Prostate gland (tissue), 2 donors: ENCODE measurements at regions of chr19 and their contacts with region 1.

Region 1: DNA sequence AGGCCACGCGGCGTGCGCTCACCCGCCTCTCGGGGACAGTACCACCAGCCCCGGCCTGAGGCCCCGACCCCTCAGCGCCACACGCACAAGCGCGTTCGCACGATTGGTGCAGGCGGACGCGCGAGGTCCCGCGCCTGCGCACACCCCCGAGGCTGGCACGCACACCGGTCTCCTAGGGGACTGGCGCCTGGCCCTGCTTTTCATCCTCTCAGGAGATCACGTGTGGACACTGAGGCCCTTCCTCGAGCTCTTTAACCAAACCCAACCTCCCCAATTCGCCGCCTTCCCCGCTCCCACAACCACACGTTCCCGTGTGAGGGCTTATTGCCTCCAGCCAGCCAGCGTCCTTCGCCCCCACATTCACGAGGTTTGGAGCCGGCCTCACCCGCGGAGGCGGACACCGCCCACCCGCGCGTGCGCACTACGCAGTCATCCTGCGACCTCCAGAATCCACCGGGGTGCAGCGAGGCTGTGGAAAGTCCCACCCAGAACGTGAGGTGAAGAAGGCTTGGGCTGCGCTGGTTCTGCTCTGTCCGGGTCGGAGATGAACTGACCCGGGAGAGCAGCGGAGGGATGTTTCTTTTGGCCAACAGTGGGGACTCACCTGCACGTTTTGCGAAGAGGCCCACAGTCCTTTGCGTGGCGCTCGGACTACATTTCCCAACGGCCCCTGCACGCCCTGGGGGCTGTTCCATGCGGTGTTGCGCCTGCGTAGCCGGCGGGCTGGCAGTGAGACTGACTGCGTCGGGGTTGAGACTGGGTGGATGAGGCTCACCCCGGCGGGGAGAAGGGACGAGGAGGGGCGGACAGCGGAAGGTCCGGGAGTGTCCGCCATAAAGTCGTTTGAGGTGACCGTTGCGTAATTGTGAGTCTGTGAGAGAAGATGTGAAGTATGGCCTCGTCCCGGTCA is 539 bp upstream of the ZNF667 start:
- DNase-seq: peak; percentile 92
- H3K4me3 ChIP-seq: peak overlapping the region; percentile 46 to 69
- H3K27ac ChIP-seq: peak overlapping the region; percentile 82 to 84
- H3K4me1 ChIP-seq: no peaks in the 10 kb centered on the region
- H3K27me3 ChIP-seq: no peaks in the 10 kb centered on the region
- CTCF ChIP-seq: no peak
- POLR2A ChIP-seq: peak; percentile 47

Region 2: DNA sequence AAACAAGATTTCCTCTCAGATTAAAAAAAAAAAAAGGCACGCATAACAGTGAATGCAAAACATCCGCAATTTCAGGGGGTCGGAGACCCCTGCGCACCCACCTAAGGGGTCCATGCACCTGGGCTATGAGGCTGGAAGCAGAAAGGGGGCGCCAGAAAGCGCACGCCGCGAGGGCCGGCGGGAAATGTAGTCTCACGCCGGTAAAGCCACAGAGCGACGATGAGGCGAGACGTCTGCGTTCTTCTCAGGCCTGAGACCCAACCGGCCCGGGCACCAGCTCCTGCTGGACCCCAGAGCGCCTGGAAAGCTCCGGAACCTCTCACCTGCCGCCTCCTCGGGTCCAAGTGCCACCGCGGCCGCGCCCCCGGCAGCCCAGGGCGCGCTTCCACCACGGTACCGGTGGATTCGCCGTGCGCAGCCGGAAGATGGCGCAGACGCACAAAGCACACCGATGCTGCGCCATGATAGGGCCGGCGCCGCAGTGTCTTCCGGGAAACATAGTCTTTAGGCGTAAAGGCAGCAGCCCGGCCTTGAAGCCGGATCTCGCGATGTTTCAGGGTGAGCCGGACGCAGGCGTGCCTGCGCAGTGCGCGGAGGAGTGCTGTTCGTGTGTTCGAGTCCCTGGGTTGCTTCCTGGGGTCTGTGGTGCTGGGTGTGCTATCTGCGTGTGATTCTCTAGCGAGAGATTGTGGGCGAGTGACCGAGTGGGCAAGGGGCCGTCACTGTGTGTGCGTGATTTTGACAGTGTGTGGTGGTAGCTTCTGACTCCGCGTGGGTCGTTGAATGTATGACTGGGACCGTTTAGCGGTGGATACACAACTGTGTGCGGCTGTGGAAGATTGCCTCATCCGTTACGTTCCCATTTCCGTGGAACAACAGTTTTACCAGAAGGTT is 84.3 kb before region 1 on chr19 and contains the start of gene ZNF582:
- intact Hi-C with region 1: loop called (anchors 2 kb)
- DNase-seq: peak; percentile 94
- H3K4me3 ChIP-seq: peak within 1 kb of the TSS; percentile 64 to 74
- H3K27ac ChIP-seq: peak within 1 kb of the TSS; percentile 89 to 90
- H3K4me1 ChIP-seq: no peaks in the 10 kb centered on the region
- H3K27me3 ChIP-seq: no peaks in the 10 kb centered on the region
- CTCF ChIP-seq: peak; percentile 30 to 72 (median 66)
- POLR2A ChIP-seq: no peak
- total RNA-seq, gene ZNF582: 6.4 to 12.4 TPM